ENCODE measurements at regions of chr2 and their contacts with region 1.

Region 1: GRCh38 chr2:237627441-237628246 is at the start of gene LRRFIP1:
- DNase-seq: peak in 1 of 2 donors; percentile 77
- H3K4me3 ChIP-seq: peak within 1 kb of the TSS; percentile 89 to 97
- H3K27ac ChIP-seq: peak within 1 kb of the TSS; percentile 94 to 99
- H3K4me1 ChIP-seq: peaks cover 22 to 52% of the 10 kb centered on the region in 2 donors
- H3K27me3 ChIP-seq: no peaks in the 10 kb centered on the region
- CTCF ChIP-seq: peak in 1 of 3 experiments; percentile 20
- total RNA-seq, gene LRRFIP1: 133 TPM

Region 2: DNA sequence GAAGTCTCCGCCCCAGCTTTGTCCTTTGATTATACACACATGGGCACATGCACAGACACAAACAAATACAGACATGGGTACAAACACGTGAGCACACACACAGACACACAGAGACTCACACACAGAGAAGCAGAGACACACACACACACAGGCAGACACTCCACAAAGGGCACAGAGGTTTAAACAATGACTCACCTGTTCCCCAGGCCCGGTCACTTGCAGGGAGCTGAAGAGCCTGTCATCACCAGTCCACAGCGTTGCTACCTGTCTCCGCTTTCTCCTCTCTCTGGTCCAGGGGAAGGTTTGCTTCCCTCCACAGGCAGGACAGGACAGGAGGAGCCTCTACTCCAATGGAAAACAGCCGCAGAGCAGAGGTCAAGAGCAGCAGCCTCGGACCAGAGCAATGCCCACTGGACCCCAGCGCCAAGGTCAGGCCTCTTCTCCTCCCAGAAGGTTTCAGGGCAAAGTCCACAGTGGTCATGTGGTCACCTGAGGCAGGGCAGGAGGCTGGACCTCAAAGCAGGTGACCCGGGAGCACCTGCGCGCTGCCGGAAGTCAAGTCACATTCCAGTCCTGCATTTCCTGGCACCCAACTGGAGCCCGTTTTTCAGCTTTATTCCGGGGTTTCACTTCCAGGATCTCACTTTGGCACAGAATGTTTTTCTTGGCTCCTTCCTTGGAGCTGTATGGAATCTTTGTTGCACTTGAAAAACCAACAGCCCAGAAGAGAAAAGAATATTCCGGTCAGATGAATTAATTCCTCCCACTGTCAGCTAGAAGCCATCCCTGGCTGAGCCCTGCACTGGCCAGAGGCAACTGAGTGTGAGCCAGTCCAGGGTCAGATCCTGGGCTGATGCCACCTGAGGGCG is 37.1 kb before region 1 on chr2 and contains the start of gene RAB17:
- intact Hi-C with region 1: loop called (anchors 5 kb)
- DNase-seq: no peak
- H3K4me3 ChIP-seq: no peak within 1 kb of the TSS
- H3K27ac ChIP-seq: peak within 1 kb of the TSS; percentile 35 to 66
- H3K4me1 ChIP-seq: peaks cover 15 to 36% of the 10 kb centered on the region in 2 donors
- H3K27me3 ChIP-seq: no peaks in the 10 kb centered on the region
- CTCF ChIP-seq: no peak
- total RNA-seq, gene RAB17: 0.32 TPM